ENCODE measurements at regions of chr1 and their contacts with region 1.

Region 1: GRCh38 chr1:174217787-174218574 is 58.7 kb downstream of the RABGAP1L start:
- DNase-seq: no peak
- H3K4me3 ChIP-seq: no peak overlapping the region
- H3K27ac ChIP-seq: no peak overlapping the region
- H3K4me1 ChIP-seq: 0 out of 2 replicates have a peak, but pooled peaks cover 5% of the 10 kb centered on the region
- H3K27me3 ChIP-seq: no peaks in the 10 kb centered on the region
- CTCF ChIP-seq: peak; percentile 87

Region 2: DNA sequence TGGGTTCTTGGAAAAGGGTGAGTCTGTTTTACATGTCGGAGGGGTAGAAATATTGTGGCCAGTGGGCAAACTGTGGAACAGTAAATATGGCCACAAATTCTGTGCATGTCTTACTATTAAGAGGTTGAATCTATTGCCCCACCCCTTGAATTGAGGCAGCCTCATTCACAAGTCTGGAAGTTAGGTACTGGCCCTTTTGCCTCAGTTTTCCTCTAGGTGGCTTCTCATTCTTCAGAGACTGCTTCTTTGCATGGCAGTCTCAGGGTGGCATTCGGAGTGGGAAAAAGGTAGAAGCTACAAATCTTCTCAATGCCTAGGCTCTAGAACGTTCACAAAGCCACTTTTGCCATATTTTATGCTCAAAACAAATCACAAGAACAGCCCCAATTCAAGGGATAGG is 672.3 kb before region 1 on chr1:
- CTCF ChIA-PET with region 1: no interaction called
- POLR2A ChIA-PET with region 1: no interaction called
- intact Hi-C with region 1: no loop called
- DNase-seq: no peak
- H3K4me3 ChIP-seq: no peak overlapping the region
- H3K27ac ChIP-seq: no peak overlapping the region
- H3K4me1 ChIP-seq: no peaks in the 10 kb centered on the region
- H3K27me3 ChIP-seq: no peaks in the 10 kb centered on the region
- CTCF ChIP-seq: no peak

Region 3: GRCh38 chr1:173970252-173970651 is 247.7 kb before region 1 on chr1:
- CTCF ChIA-PET with region 1: interaction called, 14 read pairs
- POLR2A ChIA-PET with region 1: no interaction called
- intact Hi-C with region 1: no loop called
- DNase-seq: no peak
- H3K4me3 ChIP-seq: no peak overlapping the region
- H3K27ac ChIP-seq: no peak overlapping the region
- H3K4me1 ChIP-seq: no peaks in the 10 kb centered on the region
- H3K27me3 ChIP-seq: no peaks in the 10 kb centered on the region
- CTCF ChIP-seq: no peak

Region 4: GRCh38 chr1:173986951-173987350 is 231.0 kb before region 1 on chr1:
- CTCF ChIA-PET with region 1: no interaction called
- POLR2A ChIA-PET with region 1: no interaction called
- intact Hi-C with region 1: loop called (anchors 10 kb)
- DNase-seq: no peak
- H3K4me3 ChIP-seq: no peak overlapping the region
- H3K27ac ChIP-seq: no peak overlapping the region
- H3K4me1 ChIP-seq: no peaks in the 10 kb centered on the region
- H3K27me3 ChIP-seq: no peaks in the 10 kb centered on the region
- CTCF ChIP-seq: no peak

Region 5: DNA sequence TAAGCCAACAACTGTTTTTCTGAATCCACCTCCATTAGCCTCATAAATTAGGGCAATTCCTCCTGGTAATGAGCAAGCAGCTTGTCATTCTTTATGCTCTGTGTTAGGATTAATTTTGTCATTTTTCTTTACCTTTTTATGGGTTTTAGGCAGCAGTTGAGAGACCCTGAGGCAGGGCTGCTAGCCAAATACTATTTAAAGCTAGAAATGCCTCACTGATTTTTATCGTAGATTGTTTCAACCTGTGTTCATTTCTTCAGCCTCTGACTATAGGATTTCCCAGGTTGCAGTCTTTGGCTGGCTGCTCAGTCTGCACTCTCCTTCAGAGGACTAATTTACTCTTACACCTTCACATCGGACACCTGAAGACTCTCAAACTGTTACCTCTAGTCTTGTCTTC is 120.6 kb before region 1 on chr1:
- CTCF ChIA-PET with region 1: no interaction called
- POLR2A ChIA-PET with region 1: no interaction called
- intact Hi-C with region 1: loop called (anchors 10 kb)
- DNase-seq: no peak
- H3K4me3 ChIP-seq: no peak overlapping the region
- H3K27ac ChIP-seq: no peak overlapping the region
- H3K4me1 ChIP-seq: no peaks in the 10 kb centered on the region
- H3K27me3 ChIP-seq: no peaks in the 10 kb centered on the region
- CTCF ChIP-seq: no peak

Region 6: DNA sequence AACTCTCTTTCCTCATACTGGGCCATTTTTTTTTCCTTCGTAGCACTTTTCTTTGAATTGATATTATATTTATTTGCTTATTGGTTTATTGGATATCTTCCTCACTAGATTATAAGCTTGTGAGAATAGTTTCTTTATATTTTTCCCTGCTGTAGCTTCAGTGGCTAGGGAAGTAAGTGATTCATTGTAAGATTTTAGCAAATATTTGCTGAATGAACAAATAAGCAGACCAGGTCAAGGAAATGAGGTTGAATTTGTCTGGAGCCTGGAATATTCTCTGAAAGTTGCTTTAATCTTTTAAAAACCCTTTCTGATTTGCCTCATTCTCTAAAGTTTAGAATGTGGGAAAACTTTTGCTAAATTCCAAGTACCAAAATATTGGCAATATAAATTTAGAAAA is 21.6 kb after region 1 on chr1:
- CTCF ChIA-PET with region 1: no interaction called
- POLR2A ChIA-PET with region 1: no interaction called
- intact Hi-C with region 1: no loop called
- DNase-seq: no peak
- H3K4me3 ChIP-seq: no peak overlapping the region
- H3K27ac ChIP-seq: no peak overlapping the region
- H3K4me1 ChIP-seq: no peaks in the 10 kb centered on the region
- H3K27me3 ChIP-seq: no peaks in the 10 kb centered on the region
- CTCF ChIP-seq: no peak

Region 7: GRCh38 chr1:175443332-175443731 is 1225.4 kb after region 1 on chr1:
- CTCF ChIA-PET with region 1: no interaction called
- POLR2A ChIA-PET with region 1: no interaction called
- intact Hi-C with region 1: no loop called
- DNase-seq: no peak
- H3K4me3 ChIP-seq: no peak overlapping the region
- H3K27ac ChIP-seq: no peak overlapping the region
- H3K4me1 ChIP-seq: no peaks in the 10 kb centered on the region
- H3K27me3 ChIP-seq: peaks cover 18% of the 10 kb centered on the region
- CTCF ChIP-seq: no peak